Activated T-helper 1 cell treated with anti-CD3 and anti-CD28 coated beads, Interleukin-12 subunit alpha, Interleukin-12 subunit beta, Interleukin-2, Interleukin-4 antibody, amounts not matched to agents 30 ng/mL and 10 ng/mL and 1 ng/mL, durations not matched to agents 14 hours and 24 hours and 36 hours (primary cell): ENCODE measurements at regions of chr3 and their contacts with region 1.

Region 1: GRCh38 chr3:112498914-112499711 is at the start of gene BTLA:
- DNase-seq: peak; percentile 35
- H3K4me3 Mint-ChIP-seq: peak within 1 kb of the TSS; percentile 95
- H3K27ac Mint-ChIP-seq: peak within 1 kb of the TSS; percentile 97
- H3K4me1 Mint-ChIP-seq: peaks cover 67% of the 10 kb centered on the region
- H3K27me3 Mint-ChIP-seq: no peaks in the 10 kb centered on the region
- total RNA-seq, gene BTLA: 39.4 and 40.7 TPM in 2 replicates

Region 2: GRCh38 chr3:112074721-112075497 is 424.2 kb before region 1 on chr3:
- intact Hi-C with region 1: no loop called
- DNase-seq: peak; percentile 33
- H3K4me3 Mint-ChIP-seq: peak overlapping the region; percentile 61
- H3K27ac Mint-ChIP-seq: peak overlapping the region; percentile 68
- H3K4me1 Mint-ChIP-seq: peaks cover 49% of the 10 kb centered on the region
- H3K27me3 Mint-ChIP-seq: peaks cover 2% of the 10 kb centered on the region

Region 3: DNA sequence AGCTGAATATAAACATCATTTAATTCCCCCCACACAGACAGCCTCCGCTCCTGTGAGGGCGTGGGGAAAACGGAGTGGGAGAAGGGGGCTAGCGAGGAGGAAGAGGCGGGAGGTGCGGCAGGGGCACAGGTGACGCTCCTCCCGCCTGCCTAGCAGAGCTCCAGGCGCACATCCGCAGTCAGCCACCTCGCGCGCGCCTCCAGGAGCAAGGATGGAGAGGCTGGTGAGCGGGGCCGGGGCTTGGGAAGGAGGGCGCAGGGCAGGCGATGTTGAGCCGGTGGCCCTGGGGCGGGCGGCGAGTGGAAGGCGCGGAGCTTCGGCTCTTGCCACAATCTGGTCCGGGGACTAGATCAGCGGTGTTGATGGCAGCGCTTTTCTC is 166.1 kb before region 1 on chr3 and contains the start of gene CD200:
- intact Hi-C with region 1: loop called (anchors 2 kb)
- DNase-seq: peak; percentile 44
- H3K4me3 Mint-ChIP-seq: peak within 1 kb of the TSS; percentile 97
- H3K27ac Mint-ChIP-seq: peak within 1 kb of the TSS; percentile 84
- H3K4me1 Mint-ChIP-seq: peaks cover 41% of the 10 kb centered on the region
- H3K27me3 Mint-ChIP-seq: peaks cover 1% of the 10 kb centered on the region
- total RNA-seq, gene CD200: 141 TPM in 2 replicates

Region 4: GRCh38 chr3:112464264-112464663 is 34.8 kb before region 1 on chr3:
- intact Hi-C with region 1: loop called (anchors 1 kb)
- DNase-seq: no peak
- H3K4me3 Mint-ChIP-seq: peak overlapping the region; percentile 31
- H3K27ac Mint-ChIP-seq: peak overlapping the region; percentile 59
- H3K4me1 Mint-ChIP-seq: peaks cover 85% of the 10 kb centered on the region
- H3K27me3 Mint-ChIP-seq: peaks cover 1% of the 10 kb centered on the region

Region 5: GRCh38 chr3:112979240-112979832 is 480.2 kb after region 1 on chr3:
- intact Hi-C with region 1: loop called (anchors 10 kb)
- DNase-seq: no peak
- H3K4me3 Mint-ChIP-seq: no peak overlapping the region
- H3K27ac Mint-ChIP-seq: no peak overlapping the region
- H3K4me1 Mint-ChIP-seq: peaks cover 67% of the 10 kb centered on the region
- H3K27me3 Mint-ChIP-seq: no peaks in the 10 kb centered on the region